ENCODE measurements at regions of chr20 and their contacts with region 1.

Region 1: DNA sequence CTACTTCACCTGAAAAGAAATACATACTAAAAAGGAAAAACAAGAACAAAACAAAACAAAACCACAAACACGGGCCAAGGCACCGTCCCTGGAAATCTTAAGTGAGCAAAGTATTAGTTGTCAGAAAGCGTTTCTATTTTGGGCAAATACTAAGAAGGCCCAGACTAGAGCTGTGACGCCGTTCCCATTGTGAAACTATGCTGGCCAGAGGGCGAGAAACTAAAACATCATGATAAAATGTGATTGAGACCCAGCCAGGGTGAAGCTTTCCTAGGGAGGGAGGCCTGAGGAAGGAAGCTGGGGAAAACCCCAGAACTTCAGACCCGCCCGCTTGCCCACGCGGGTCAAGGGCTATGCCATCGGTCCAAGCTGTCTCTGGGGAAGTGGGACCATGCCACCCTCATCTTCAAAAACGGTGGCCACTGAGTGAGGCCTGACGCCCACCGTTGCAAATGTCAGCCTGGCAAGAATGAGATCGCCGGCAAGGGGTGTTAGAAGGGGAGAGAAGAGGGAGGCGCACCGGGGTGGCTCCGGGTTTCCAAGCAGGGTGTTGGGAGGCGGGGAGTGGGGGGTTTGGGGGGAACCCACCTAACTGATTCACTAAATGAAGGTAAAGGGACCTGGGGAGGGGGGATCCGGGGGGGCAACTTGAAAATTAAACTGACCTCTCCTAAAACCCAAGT is 1950.9 kb upstream of the DEFB115 start:
- DNase-seq: peak; percentile 45
- H3K4me3 Mint-ChIP-seq: peak overlapping the region; percentile 76
- H3K27ac Mint-ChIP-seq: peak overlapping the region; percentile 97
- H3K4me1 Mint-ChIP-seq: peaks cover 51% of the 10 kb centered on the region
- H3K27me3 Mint-ChIP-seq: no peaks in the 10 kb centered on the region

Region 2: DNA sequence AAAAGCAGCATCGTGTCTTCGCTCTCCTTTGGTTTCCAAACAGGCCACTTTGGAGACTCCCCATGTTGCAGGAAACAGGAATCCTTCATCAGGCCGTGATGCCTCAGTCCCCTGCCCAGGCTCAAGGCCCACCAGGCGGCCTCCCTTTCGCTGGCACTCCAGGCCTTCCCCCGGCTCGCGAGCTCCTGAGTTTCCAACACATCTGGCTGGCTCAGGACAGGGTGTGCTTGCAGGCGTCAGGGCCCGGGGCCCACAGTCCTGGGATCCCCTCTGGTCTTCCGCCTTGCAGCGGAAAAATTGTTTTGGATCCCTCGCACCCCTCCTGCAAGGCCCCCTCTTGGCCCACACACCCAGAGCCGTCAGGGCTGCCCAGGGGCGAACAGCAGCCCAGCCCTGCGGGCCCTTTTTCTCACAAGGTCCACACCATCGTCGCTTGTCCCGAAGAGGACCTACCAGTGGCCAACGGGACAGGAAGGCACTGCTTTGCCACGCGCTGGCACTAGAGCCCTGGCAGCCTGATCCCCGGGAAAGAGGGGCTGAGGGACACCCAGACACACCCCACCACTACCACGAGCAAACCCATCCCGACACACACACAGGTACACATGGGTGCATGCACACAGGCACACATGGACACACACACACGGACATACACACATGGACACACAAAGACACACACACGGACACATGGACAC is 20.0 kb after region 1 on chr20:
- intact Hi-C with region 1: loop called (anchors 2 kb)
- DNase-seq: no peak
- H3K4me3 Mint-ChIP-seq: peak overlapping the region; percentile 8
- H3K27ac Mint-ChIP-seq: peak overlapping the region; percentile 0
- H3K4me1 Mint-ChIP-seq: peaks cover 8% of the 10 kb centered on the region
- H3K27me3 Mint-ChIP-seq: peaks cover 2% of the 10 kb centered on the region

Region 3: GRCh38 chr20:29349836-29350235 is 43.3 kb after region 1 on chr20:
- intact Hi-C with region 1: no loop called
- DNase-seq: no peak
- H3K4me3 Mint-ChIP-seq: no peak overlapping the region
- H3K27ac Mint-ChIP-seq: no peak overlapping the region
- H3K4me1 Mint-ChIP-seq: no peaks in the 10 kb centered on the region
- H3K27me3 Mint-ChIP-seq: no peaks in the 10 kb centered on the region

Region 4: GRCh38 chr20:29443819-29444218 is 137.3 kb after region 1 on chr20:
- intact Hi-C with region 1: no loop called
- DNase-seq: no peak
- H3K4me3 Mint-ChIP-seq: no peak overlapping the region
- H3K27ac Mint-ChIP-seq: no peak overlapping the region
- H3K4me1 Mint-ChIP-seq: no peaks in the 10 kb centered on the region
- H3K27me3 Mint-ChIP-seq: no peaks in the 10 kb centered on the region

Region 5: DNA sequence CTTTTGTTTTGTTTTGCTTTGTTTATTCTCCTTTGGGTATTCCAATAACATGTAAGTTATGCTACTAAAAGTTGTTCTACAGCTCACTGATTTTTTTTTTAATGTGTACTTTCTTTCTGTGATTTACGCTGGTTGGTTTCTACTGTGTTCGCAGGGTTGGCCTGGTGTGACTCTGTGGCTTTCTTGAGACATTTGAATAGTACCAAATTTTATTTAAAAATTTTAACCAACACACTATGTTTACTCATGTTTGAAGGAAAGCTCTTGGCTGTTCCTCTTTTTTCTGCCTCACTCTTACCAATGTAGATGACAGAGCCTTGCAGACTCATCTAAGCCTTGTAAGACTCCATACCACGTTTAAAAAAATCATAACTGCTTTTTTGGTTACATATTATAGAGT is 166.1 kb after region 1 on chr20:
- intact Hi-C with region 1: no loop called
- DNase-seq: no peak
- H3K4me3 Mint-ChIP-seq: no peak overlapping the region
- H3K27ac Mint-ChIP-seq: no peak overlapping the region
- H3K4me1 Mint-ChIP-seq: no peaks in the 10 kb centered on the region
- H3K27me3 Mint-ChIP-seq: no peaks in the 10 kb centered on the region

Region 6: GRCh38 chr20:30168025-30168799 is 861.7 kb after region 1 on chr20:
- intact Hi-C with region 1: loop called (anchors 2 kb)
- DNase-seq: peak; percentile 7
- H3K4me3 Mint-ChIP-seq: peak overlapping the region; percentile 37
- H3K27ac Mint-ChIP-seq: no peak overlapping the region
- H3K4me1 Mint-ChIP-seq: peaks cover 26% of the 10 kb centered on the region
- H3K27me3 Mint-ChIP-seq: peaks cover 1% of the 10 kb centered on the region

Region 7: DNA sequence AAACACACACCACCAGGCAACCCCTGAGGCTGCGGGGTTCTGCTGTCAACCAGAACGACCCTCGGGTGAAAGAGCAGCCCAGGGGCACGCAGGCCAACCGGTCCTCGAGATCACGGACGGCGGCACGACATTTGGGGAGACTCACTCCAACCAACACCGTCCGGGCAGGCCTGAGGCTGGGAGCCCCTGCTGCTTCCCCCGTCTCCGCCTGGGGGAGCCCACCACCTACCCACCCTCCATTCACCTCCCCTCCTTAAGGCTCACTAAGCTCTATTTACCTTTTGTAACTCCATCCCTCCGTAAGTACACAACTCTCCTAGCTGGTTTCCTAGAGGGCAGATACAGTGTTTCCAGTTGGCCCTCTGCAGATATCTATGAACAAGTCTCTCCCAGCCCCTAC is 979.6 kb after region 1 on chr20:
- intact Hi-C with region 1: loop called (anchors 5 kb)
- DNase-seq: no peak
- H3K4me3 Mint-ChIP-seq: no peak overlapping the region
- H3K27ac Mint-ChIP-seq: peak overlapping the region; percentile 19
- H3K4me1 Mint-ChIP-seq: peaks cover 63% of the 10 kb centered on the region
- H3K27me3 Mint-ChIP-seq: no peaks in the 10 kb centered on the region

Region 8: GRCh38 chr20:30376767-30377666 is 1070.5 kb after region 1 on chr20:
- intact Hi-C with region 1: loop called (anchors 2 kb)
- DNase-seq: peak; percentile 88
- H3K4me3 Mint-ChIP-seq: peak overlapping the region; percentile 90
- H3K27ac Mint-ChIP-seq: peak overlapping the region; percentile 91
- H3K4me1 Mint-ChIP-seq: peaks cover 46% of the 10 kb centered on the region
- H3K27me3 Mint-ChIP-seq: no peaks in the 10 kb centered on the region